Posterior vena cava (tissue), 2 donors: ENCODE measurements at regions of chr2 and their contacts with region 1.

Region 1: GRCh38 chr2:192283450-192283849 is 88.7 kb upstream of the TMEFF2 start:
- DNase-seq: no peak

Region 2: DNA sequence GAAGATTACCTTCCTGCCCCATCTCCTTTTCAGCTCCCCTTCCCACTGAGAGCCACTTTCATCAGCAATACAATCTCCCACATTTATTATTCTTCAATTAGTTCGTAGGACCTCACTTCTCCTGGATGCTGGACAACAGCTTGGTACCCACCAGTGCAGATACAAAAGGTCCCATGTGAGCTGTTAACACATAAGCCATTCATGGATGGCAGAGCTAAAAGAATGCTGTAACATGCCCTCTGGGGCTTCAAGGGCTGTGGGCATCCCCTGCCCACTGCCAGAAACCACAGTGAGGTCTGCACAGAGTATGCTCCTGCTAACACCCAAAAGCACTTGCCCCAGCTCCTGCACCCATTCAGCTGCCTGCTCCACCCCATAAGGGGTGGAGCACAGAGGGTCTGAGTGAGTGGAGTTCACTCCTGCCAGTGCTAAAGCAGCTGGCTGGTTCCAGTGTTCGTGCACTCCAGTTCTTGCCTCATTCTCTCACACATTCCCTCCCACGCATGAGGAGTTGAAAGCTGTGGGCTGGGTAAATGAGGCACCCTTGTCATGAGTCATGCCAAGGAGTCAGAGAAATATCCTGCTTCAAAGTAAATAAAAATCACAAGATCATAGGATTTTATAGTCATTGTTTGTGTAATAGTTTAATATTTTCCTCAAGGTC is 217.2 kb after region 1 on chr2:
- intact Hi-C with region 1: no loop called
- DNase-seq: no peak

Region 3: GRCh38 chr2:192854706-192855105 is 571.3 kb after region 1 on chr2:
- intact Hi-C with region 1: loop called in 1 of 2 experiments (anchors 5 kb)
- DNase-seq: no peak